ENCODE measurements at regions of chr19 and their contacts with region 1.

Region 1: DNA sequence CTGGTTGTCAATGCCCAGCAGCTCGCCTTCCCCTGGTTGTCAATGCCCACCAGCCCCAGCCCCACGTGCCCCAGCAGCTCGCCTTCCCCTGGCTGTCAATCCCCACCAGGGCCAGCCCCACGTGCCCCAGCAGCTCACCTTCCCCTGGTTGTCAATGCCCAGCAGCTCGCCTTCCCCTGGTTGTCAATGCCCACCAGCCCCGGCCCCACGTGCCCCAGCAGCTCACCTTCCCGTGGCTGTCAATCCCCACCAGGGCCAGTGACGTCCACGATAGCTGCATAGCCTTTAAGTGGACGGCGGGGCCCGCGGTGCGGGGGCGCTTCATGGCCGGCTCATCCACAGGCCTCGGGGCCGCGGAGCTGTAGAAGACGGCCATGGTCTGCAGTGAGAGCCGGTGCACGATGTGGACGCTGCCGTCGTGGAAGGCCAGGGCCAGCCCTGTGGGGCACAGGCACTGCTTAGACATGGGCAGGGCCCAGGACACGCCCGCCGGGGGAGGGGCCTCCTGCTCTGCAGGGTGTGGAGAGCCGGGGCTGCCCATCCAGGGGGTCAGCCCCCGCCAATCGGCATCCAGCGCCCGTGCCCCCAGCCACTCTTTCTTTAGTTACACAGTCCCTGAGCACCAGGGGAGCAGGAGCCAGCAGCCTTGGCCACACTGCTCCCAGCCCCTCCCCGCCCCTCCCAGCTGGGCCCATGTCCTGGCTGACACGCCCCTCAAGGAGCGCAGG is 13.1 kb downstream of the MED16 start:
- DNase-seq: peak in 1 of 4 experiments; percentile 39
- ATAC-seq: peak; percentile 46
- H3K4me3 ChIP-seq: no peak overlapping the region
- H3K27ac ChIP-seq: no peak overlapping the region
- H3K4me1 ChIP-seq: peaks cover 0 to 42% of the 10 kb centered on the region in 2 experiments; a peak in 2 of 5 replicates
- H3K27me3 ChIP-seq: no peaks in the 10 kb centered on the region
- CTCF ChIP-seq: no peak
- EP300 ChIP-seq: no peak
- POLR2A ChIP-seq: no peak
- RAD21 ChIP-seq: no peak

Region 2: DNA sequence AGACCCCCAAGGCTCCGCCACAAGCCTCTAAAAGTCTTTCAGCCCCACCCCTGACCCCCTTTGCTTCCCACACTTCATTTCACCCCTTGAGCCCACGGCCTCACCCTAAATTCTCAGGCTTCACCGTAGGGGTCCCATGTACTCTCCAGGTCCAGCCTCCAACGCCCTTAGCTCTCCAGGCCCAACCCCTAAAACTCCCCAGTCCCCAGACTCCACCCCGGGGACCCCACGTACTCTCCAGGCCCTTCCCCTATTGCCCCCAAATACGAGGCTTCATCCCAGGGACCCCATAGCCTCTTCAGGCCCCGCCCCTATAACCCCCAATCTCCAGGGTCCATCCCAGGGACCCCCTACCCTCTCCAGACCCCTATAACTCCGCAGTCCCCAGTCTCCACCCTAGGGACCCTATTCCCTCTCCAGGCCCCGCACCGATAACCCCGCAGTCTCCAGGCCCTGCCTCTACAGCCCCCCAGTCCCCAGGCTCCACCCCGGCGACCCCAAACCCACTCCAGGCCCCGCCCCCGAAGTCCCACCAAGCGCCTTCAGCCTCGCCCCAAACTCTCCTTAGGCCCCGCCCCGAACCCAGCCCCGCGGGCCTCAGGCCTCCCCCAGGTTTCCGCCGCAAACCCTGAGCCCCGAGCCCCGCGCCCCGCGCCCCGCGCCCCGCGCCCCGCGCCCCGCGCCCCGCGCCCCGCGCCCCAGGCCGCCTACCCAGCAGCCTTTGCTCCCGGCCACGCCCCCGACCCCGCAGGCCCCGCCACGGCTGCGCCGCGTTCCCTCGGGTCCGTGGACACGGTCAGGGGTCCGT is 12.6 kb after region 1 on chr19:
- CTCF ChIA-PET with region 1: no interaction called
- POLR2A ChIA-PET with region 1: interaction called, 11 read pairs
- in situ Hi-C with region 1: no loop called
- intact Hi-C with region 1: no loop called
- DNase-seq: peak in 2 of 4 experiments; percentile 87 to 88
- ATAC-seq: peak; percentile 53
- H3K4me3 ChIP-seq: peak overlapping the region; percentile 79
- H3K27ac ChIP-seq: peak overlapping the region; percentile 100
- H3K4me1 ChIP-seq: peaks cover 9 to 68% of the 10 kb centered on the region in 2 experiments; a peak in 4 of 5 replicates
- H3K27me3 ChIP-seq: no peaks in the 10 kb centered on the region
- CTCF ChIP-seq: no peak
- EP300 ChIP-seq: no peak
- POLR2A ChIP-seq: no peak
- RAD21 ChIP-seq: no peak

Region 3: GRCh38 chr19:907183-907853 is 27.4 kb after region 1 on chr19:
- CTCF ChIA-PET with region 1: no interaction called
- POLR2A ChIA-PET with region 1: interaction called, 11 read pairs
- in situ Hi-C with region 1: no loop called
- intact Hi-C with region 1: no loop called
- DNase-seq: peak; percentile 79 to 99 (median 89)
- ATAC-seq: peak; percentile 82
- H3K4me3 ChIP-seq: peak overlapping the region; percentile 18
- H3K27ac ChIP-seq: peak overlapping the region; percentile 95
- H3K4me1 ChIP-seq: peaks cover 43 to 83% of the 10 kb centered on the region in 2 experiments
- H3K27me3 ChIP-seq: no peaks in the 10 kb centered on the region
- CTCF ChIP-seq: peak in 2 of 3 experiments; percentile 14 to 32; a peak in 3 of 6 replicates
- EP300 ChIP-seq: peak; percentile 97
- POLR2A ChIP-seq: peak; percentile 60; the same call in 1 of the 2 replicates
- RAD21 ChIP-seq: peak; percentile 25 to 38; a peak in 3 of 4 replicates

Region 4: DNA sequence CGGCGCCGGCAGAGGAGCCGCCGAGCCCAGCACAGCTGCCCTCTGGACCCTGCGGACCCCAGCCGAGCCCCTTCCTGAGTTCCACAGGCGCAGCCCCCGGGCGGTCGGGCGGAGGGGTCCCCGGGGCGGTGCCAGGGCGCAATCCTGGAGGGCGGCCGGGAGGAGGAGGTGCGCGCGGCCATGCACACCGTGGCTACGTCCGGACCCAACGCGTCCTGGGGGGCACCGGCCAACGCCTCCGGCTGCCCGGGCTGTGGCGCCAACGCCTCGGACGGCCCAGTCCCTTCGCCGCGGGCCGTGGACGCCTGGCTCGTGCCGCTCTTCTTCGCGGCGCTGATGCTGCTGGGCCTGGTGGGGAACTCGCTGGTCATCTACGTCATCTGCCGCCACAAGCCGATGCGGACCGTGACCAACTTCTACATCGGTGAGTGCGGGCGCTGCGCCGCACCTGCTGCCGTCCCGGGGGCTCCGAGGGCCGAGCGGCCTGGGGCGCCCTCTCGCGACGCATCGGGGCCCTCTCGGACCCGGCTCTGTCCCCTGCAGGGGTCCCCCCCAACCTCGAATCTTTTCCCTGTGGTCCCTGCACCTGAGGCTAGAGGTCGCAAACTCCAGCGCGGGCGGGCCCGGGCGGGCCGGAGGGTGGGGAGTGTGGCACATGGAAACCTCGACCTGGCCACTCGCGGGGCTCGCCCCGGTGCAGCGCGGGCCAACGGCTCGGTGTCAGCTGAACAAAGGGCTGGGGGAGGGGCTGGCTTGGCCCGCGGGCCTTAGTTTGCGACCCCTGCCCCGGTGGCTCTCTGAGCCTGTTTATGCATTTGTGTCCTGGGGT is 37.7 kb after region 1 on chr19 and contains the start of gene KISS1R:
- CTCF ChIA-PET with region 1: no interaction called
- POLR2A ChIA-PET with region 1: no interaction called
- in situ Hi-C with region 1: no loop called
- intact Hi-C with region 1: no loop called
- DNase-seq: peak; percentile 60 to 90 (median 74)
- ATAC-seq: peak; percentile 81
- H3K4me3 ChIP-seq: peak within 1 kb of the TSS; percentile 65
- H3K27ac ChIP-seq: peak within 1 kb of the TSS; percentile 89
- H3K4me1 ChIP-seq: peaks cover 6 to 69% of the 10 kb centered on the region in 2 experiments; a peak in 4 of 5 replicates
- H3K27me3 ChIP-seq: no peaks in the 10 kb centered on the region
- CTCF ChIP-seq: peak; percentile 91 to 98 (median 96)
- EP300 ChIP-seq: peak; percentile 31; the same call in 1 of the 2 replicates
- POLR2A ChIP-seq: peak; percentile 70
- RAD21 ChIP-seq: peak; percentile 90 to 96
- polyA plus RNA-seq, gene KISS1R: 0.55 to 0.75 TPM

Region 5: DNA sequence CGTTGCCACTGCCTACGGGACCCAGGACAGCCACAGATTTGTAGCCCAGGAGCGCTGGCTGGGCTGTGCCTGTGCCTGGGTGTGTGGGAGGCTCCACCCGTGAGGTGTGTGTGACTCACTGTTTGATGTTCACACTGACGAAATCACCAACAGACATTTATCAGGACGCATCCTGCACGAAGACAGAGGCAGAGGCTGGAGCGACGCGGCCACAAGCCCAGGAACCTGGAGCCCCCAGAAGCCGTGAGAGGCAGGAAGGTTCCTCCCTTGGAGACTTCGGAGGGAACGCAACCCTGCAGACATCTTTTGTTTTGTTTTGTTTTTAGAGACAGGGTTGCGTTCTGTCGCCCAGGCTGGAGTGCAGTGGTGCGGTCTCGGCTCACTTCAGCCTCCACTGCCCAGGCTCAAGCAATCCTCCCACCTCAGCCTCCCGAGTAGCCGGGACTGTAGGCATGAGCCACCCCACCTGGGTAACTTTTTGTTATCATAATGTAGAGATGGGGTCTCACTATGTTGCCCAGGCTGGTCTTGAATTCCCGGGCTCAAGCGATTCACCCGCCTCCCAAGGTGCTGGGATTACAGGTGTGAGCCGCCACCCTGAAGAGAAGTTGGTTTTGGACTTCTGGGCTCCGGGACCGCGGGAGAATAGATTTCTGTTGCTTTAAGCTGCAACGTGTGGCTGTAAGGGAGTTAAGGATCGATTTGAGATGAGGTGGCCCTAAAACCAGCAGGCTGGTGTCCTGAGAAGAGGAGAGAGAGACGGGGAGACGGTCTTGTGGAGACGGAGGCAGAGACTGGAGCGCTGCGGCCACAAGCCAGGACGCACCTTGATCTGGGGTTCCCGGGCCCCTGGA is 79.3 kb after region 1 on chr19:
- CTCF ChIA-PET with region 1: no interaction called
- POLR2A ChIA-PET with region 1: no interaction called
- in situ Hi-C with region 1: no loop called
- intact Hi-C with region 1: no loop called
- DNase-seq: peak; percentile 58 to 90 (median 72)
- ATAC-seq: peak; percentile 53
- H3K4me3 ChIP-seq: no peak overlapping the region
- H3K27ac ChIP-seq: peak overlapping the region; percentile 50; the same call in 2 of the 3 replicates
- H3K4me1 ChIP-seq: peaks cover 62 to 96% of the 10 kb centered on the region in 2 experiments
- H3K27me3 ChIP-seq: no peaks in the 10 kb centered on the region
- CTCF ChIP-seq: no peak
- EP300 ChIP-seq: peak; percentile 79
- POLR2A ChIP-seq: no peak
- RAD21 ChIP-seq: no peak

Region 6: DNA sequence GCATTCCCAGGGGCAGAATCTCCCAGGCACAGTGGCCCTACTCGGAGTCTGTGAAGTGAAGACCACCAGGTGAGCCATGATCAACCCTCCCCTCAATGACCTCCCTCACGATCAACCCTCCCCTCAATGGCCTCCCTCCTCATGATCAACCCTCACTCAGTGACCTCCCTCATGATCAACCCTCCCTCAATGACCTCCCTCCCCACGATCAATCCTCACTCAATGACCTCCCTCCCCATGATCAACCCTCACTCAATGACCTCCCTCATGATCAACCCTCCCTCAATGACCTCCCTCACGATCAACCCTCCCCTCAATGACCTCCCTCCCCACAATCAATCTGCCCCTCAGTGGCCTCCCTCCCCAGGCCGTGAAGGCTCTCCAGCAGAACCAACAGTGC is 262.1 kb after region 1 on chr19:
- CTCF ChIA-PET with region 1: no interaction called
- POLR2A ChIA-PET with region 1: no interaction called
- in situ Hi-C with region 1: no loop called
- intact Hi-C with region 1: no loop called
- DNase-seq: no peak
- ATAC-seq: no peak
- H3K4me3 ChIP-seq: no peak overlapping the region
- H3K27ac ChIP-seq: no peak overlapping the region
- H3K4me1 ChIP-seq: peaks cover 0 to 42% of the 10 kb centered on the region in 2 experiments; a peak in 2 of 5 replicates
- H3K27me3 ChIP-seq: no peaks in the 10 kb centered on the region
- CTCF ChIP-seq: no peak
- EP300 ChIP-seq: no peak
- POLR2A ChIP-seq: no peak
- RAD21 ChIP-seq: no peak

Measured in K562 (cell line).